Cardiac septum (tissue), 1 donor: ENCODE measurements at regions of chr1 and their contacts with region 1.

Region 1: GRCh38 chr1:202462342-202463076 is 114.0 kb downstream of the PPP1R12B start:
- DNase-seq: no peak

Region 2: DNA sequence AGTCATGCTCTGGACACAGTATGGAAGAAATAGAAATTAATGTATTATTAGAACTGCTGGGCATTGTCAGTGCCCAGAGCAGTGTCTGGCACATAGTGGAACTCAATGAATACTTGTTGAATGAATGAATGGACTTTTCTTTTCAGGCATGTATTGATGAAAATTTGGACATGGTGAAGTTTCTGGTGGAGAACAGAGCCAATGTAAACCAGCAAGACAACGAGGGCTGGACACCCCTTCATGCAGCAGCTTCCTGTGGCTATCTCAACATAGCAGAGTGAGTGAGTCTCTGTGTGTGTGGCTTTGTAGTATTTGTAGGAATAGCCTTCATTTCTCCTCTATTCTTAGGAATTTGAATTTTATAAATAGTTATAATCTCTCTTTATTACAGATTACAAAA is 45.9 kb before region 1 on chr1:
- intact Hi-C with region 1: loop called (anchors 5 kb)
- DNase-seq: no peak

Region 3: DNA sequence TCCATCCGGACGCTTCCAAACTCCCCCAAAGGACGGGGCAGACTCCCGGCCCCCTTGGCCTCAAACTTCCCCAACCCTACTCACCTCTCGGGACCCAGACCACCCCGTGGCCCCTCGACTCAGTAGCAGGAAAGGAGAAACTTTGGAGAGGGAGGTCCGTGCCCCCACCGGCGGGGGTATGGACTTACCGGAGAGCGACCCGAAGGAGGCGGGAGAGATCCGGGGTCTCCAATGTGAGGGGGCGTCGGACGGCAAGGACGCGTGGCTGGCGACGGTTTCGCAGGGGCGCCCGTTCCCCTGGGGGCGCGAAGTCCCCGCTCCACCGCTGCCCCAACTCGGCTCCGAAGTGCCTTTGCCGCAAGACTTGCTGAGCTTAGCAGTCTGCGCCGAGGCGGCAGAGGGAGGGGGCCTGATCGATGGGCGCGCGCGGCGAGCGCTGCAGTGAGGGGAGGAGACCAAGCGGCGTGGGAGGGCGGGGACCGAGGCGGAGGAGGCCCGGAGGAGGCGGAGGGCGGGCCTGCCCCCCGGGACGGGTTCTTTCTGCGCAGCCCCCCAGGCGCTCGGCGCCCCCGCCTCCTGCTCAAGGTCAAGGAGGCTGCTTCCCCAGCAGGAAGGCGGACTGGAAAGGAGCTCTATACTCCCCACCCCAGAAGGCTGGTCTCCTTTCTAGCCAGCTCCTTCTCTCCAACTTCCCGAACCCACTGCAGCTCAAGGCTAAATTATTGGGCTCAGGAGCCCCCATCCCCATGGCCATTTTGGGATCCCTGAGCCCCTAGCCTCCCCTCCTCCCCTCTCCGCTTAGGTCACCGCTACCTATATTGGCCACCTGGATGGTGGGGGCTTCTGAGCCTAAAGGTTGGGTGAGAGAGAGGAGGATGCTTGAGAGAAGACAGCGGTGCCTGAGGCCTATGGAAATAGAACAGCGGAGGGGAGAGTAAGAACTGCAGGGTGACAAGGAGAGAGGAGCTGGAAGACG is 247.8 kb after region 1 on chr1 and contains the start of gene SYT2:
- intact Hi-C with region 1: loop called (anchors 10 kb)
- DNase-seq: no peak
- total RNA-seq, gene SYT2: not detected